ENCODE measurements at regions of chr12 and their contacts with region 1.

Region 1: DNA sequence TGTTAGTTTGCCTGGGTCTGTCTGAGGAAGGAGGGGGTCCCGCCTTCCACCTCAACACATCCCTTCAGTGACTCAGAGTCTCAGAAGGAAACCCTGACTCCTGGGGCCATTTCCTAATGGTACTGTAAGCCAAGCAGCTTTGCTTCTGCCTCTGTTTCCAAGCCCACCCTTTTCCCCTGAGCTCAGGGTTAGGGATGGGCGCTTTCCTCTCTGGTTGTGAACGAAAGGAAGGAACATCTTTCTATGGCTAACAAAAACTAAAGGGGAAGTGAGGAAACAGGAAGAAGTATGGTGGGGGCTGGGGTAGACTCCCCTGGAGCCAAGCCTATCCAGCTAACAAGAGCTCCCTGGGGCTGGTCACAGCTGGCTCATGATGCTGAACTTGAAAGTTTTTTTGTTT is 11.6 kb upstream of the UNC119B start:
- DNase-seq: no peak
- ATAC-seq: no peak
- H3K4me3 ChIP-seq: no peak overlapping the region
- H3K27ac ChIP-seq: no peak overlapping the region
- H3K4me1 ChIP-seq: no peaks in the 10 kb centered on the region
- H3K27me3 ChIP-seq: no peaks in the 10 kb centered on the region
- CTCF ChIP-seq: no peak
- POLR2A ChIP-seq: no peak
- RAD21 ChIP-seq: no peak

Region 2: DNA sequence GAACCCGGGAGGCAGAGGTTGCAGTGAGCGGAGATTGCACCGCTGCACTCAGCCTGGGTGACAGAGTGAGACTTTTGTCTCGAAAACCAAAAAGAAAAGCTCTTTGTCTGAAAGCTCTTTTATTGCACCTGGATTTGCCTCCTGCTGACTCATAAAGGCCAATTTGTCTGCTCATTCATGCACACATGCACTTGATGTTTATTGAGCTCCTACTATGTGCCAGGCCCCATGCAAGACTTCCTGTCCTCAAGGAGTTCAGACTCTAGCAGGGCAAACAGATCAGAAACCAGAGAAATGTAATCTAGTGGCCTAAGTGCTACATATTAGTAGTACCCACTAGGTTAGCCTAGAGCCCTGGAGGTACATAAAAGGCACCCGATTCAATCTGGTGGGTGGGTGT is 28.0 kb before region 1 on chr12:
- CTCF ChIA-PET with region 1: no interaction called
- POLR2A ChIA-PET with region 1: no interaction called
- dilution Hi-C with region 1: no loop called
- in situ Hi-C with region 1: no loop called
- intact Hi-C with region 1: loop called (anchors 1 kb)
- DNase-seq: no peak
- ATAC-seq: no peak
- H3K4me3 ChIP-seq: no peak overlapping the region
- H3K27ac ChIP-seq: no peak overlapping the region
- H3K4me1 ChIP-seq: no peaks in the 10 kb centered on the region
- H3K27me3 ChIP-seq: peaks cover 13% of the 10 kb centered on the region
- CTCF ChIP-seq: no peak
- POLR2A ChIP-seq: no peak
- RAD21 ChIP-seq: no peak

Measured in IMR-90 (cell line).